Posterior vena cava (tissue), 2 donors: ENCODE measurements at regions of chr10 and their contacts with region 1.

Region 1: DNA sequence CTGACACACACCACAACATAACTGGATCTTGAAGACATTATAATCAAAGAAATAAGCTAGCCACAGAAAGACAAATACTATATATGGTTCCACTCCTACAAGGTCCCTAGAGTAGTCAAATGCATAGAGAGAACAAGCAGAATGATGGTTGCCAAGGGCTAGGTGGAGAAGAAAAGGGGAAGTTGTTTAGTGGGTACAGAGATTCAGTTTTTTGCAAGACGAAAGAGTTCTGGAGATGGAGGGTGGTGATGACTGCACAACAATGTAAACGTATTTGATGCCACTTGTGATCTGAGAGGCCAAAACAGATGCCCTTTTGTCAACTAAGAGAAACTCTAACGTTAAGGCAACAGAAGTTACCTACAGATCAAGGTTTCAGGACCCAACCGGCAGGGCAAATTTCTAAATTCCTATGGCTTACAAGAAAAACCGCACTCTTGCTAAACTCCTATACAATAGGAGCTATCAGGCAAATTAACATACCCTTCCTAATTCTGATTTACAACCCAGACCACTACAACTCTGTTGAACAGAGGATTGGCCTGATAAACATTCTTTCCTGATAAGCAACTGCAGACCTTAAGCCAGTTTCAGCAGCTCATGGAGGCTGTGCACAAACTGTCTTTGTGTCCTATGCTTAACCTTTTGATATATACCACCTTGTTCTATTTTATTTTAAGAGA is 69.0 kb downstream of the FAM107B start:
- DNase-seq: no peak

Region 2: DNA sequence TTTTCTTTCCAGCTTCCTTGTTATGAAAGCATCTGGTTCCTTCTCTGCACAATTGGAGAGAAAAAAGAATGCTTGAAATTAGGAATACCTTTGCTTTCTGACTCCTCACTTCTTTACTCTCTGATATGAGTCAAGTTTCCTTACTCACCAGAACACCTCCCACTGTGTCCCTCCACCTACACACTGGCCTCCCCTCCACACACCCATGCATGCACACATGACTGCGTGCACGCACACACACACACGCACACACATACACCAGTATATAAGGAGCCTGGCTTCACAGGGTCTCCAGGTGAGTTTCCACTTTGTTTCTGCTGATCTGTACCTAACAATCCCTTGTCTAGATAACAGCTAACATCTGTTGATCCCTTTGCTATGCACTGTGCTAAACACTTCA is 1719.8 kb after region 1 on chr10:
- intact Hi-C with region 1: loop called in 1 of 2 experiments (anchors 10 kb)
- DNase-seq: no peak